ENCODE measurements at regions of chr14 and their contacts with region 1.

Region 1: DNA sequence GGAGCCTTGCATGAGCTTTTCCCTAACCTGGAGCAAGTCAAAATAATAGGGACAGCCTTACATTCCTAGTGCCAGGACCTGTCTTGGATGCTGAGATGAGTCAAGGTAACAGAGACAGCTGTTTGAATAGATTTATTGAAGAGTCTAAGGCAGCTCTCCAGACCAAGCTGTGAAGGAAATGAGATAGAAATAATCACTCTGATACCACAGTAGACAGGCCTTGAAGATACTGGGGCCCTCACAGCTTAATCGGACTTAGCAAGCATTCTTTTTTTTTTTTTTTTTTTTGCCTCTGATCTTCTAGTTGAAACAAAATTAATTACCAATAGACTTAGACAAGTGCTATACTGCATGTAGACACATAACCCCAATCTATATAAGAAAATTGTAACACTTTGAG is 3.1 kb upstream of the RNASE9 start:
- DNase-seq: no peak
- H3K4me3 Mint-ChIP-seq: no peak overlapping the region
- H3K27ac Mint-ChIP-seq: no peak overlapping the region
- H3K4me1 Mint-ChIP-seq: no peaks in the 10 kb centered on the region
- H3K27me3 Mint-ChIP-seq: peaks cover 31% of the 10 kb centered on the region
- CTCF ChIP-seq: no peak

Region 2: DNA sequence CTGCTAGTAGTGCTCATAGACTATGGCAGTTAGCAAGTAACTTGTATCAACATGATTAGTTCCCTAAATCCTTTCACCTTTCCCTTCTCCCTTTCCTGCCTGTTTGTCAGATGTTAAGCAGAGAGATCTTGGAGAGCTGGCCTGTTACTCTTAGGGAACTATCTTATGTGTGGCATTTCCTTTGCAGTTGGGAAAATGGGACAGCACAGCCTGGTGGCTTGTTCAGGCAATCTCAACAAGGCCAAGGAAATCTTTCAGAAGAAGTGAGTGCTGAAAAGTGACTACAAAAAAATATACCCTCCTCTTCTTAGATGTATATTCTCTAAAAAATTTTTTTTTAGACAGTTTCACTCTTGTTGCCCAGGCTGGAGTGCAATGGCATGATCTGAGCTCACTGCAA is 213.1 kb before region 1 on chr14:
- CTCF ChIA-PET with region 1: interaction called, 11 read pairs
- intact Hi-C with region 1: no loop called
- DNase-seq: no peak
- H3K4me3 Mint-ChIP-seq: no peak overlapping the region
- H3K27ac Mint-ChIP-seq: no peak overlapping the region
- H3K4me1 Mint-ChIP-seq: peaks cover under 1% of the 10 kb centered on the region
- H3K27me3 Mint-ChIP-seq: no peaks in the 10 kb centered on the region
- CTCF ChIP-seq: no peak

Region 3: DNA sequence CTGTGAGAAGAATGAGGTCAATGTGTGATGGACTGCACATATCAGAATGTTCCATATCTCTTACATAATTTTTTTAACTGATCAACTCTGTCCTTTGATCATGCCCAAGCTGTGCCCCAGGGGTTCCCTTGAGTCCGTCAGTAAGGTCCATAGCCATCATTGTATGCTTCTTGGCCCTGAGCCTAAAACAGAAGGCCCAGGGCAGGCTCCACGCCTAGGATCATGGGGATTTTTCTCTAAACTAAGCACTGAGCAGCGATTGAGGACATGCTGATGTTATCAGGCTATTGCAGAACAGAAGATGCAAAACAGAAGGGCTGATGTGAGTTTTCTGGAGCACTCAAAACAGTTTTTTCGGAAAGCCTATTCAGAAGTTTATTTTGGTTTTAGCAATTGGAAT is 24.1 kb before region 1 on chr14:
- CTCF ChIA-PET with region 1: no interaction called
- intact Hi-C with region 1: no loop called
- DNase-seq: no peak
- H3K4me3 Mint-ChIP-seq: no peak overlapping the region
- H3K27ac Mint-ChIP-seq: no peak overlapping the region
- H3K4me1 Mint-ChIP-seq: no peaks in the 10 kb centered on the region
- H3K27me3 Mint-ChIP-seq: peaks cover 27% of the 10 kb centered on the region
- CTCF ChIP-seq: no peak

Region 4: DNA sequence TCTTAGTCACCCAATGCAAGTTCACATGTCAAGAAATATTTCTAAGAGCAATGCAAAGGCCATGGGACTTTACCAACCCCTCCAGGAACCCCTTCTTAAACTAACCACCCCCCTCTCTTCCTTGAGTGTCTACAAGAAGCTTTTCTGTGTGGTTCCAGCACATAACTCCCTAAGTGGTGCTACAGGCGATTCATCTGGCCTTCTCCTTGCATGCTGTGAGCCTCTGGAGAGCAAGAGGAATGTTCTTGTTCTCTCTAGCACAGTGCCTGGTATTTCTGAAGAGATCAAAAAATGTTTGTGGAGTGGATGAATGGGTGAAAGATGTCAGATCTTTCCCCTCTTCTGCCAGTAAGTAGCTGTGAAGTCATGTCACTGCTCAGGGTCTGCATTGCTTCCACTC is 33.1 kb after region 1 on chr14:
- CTCF ChIA-PET with region 1: no interaction called
- intact Hi-C with region 1: no loop called
- DNase-seq: no peak
- H3K4me3 Mint-ChIP-seq: no peak overlapping the region
- H3K27ac Mint-ChIP-seq: no peak overlapping the region
- H3K4me1 Mint-ChIP-seq: no peaks in the 10 kb centered on the region
- H3K27me3 Mint-ChIP-seq: peaks cover 20% of the 10 kb centered on the region
- CTCF ChIP-seq: no peak

Measured in Calu3 (cell line).